Naive thymus-derived CD4-positive, alpha-beta T cell (primary cell): ENCODE measurements at regions of chr3 and their contacts with region 1.

Region 1: GRCh38 chr3:196969660-196970546 is 1.3 kb upstream of the PIGZ start:
- DNase-seq: peak; percentile 43 to 89 (median 66)
- ATAC-seq: peak; percentile 88
- H3K4me3 ChIP-seq: peak overlapping the region; percentile 48
- H3K4me3 Mint-ChIP-seq: peak overlapping the region; percentile 63 to 88 (median 82)
- H3K27ac ChIP-seq: no peak overlapping the region
- H3K27ac Mint-ChIP-seq: peak overlapping the region in 3 of 9 donors; percentile 32 to 53 (median 44)
- H3K4me1 ChIP-seq: no peaks in the 10 kb centered on the region
- H3K4me1 Mint-ChIP-seq: peaks cover 0 to 14% (median 6%) of the 10 kb centered on the region in 7 donors
- H3K27me3 ChIP-seq: no peaks in the 10 kb centered on the region
- H3K27me3 Mint-ChIP-seq: peaks cover 0 to 12% (median 4%) of the 10 kb centered on the region in 5 donors

Region 2: DNA sequence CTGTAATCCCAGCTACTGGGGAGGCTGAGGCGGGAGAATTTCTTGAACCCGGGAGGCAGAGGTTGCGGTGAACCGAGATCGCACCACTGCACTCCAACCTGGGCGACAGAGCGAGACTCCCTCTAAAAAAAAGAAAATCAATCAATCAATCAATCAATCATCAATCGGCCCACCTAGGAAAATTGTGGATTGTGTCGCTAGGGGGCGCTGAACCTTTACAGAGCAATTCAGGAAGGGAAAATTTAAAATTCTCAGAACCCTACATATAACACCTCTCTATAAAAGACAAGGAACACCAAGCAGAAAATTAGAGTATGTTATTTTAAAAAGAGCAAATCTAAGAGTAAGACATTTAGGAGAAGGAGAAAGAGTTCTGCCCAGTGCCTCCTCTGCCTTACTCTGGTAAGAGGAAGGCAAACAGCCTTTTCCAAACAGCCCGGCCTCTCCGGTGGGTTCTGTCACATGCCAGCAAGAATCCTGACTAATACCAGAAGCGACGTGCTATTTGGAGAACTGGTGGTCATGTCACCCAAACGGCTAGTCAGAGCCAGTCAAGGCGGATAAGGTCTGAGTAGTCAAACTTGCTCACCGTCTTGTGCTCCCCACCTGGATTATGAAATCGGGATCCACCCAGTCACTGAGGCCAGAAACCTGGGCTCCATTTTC is 432.5 kb before region 1 on chr3:
- CTCF ChIA-PET with region 1: interaction called, 3 read pairs
- POLR2A ChIA-PET with region 1: no interaction called
- intact Hi-C with region 1: loop called in 1 of 2 experiments (anchors 5 kb)
- DNase-seq: peak; percentile 19 to 60 (median 43)
- ATAC-seq: peak; percentile 46
- H3K4me3 ChIP-seq: no peak overlapping the region
- H3K4me3 Mint-ChIP-seq: no peak overlapping the region
- H3K27ac ChIP-seq: no peak overlapping the region
- H3K27ac Mint-ChIP-seq: no peak overlapping the region
- H3K4me1 ChIP-seq: no peaks in the 10 kb centered on the region
- H3K4me1 Mint-ChIP-seq: peaks cover 0 to 8% (median 0%) of the 10 kb centered on the region in 7 donors
- H3K27me3 ChIP-seq: no peaks in the 10 kb centered on the region
- H3K27me3 Mint-ChIP-seq: peaks cover 0 to 14% (median 0%) of the 10 kb centered on the region in 5 donors

Region 3: GRCh38 chr3:196837819-196838420 is 132.0 kb before region 1 on chr3:
- CTCF ChIA-PET with region 1: interaction called, 16 read pairs
- POLR2A ChIA-PET with region 1: no interaction called
- intact Hi-C with region 1: loop called (anchors 1 kb)
- DNase-seq: peak; percentile 37 to 73 (median 66)
- ATAC-seq: peak; percentile 95
- H3K4me3 ChIP-seq: no peak overlapping the region
- H3K4me3 Mint-ChIP-seq: no peak overlapping the region
- H3K27ac ChIP-seq: no peak overlapping the region
- H3K27ac Mint-ChIP-seq: peak overlapping the region in 2 of 9 donors; percentile 31 to 81
- H3K4me1 ChIP-seq: no peaks in the 10 kb centered on the region
- H3K4me1 Mint-ChIP-seq: peaks cover 0 to 6% (median 0%) of the 10 kb centered on the region in 7 donors
- H3K27me3 ChIP-seq: no peaks in the 10 kb centered on the region
- H3K27me3 Mint-ChIP-seq: no peaks in the 10 kb centered on the region

Region 4: DNA sequence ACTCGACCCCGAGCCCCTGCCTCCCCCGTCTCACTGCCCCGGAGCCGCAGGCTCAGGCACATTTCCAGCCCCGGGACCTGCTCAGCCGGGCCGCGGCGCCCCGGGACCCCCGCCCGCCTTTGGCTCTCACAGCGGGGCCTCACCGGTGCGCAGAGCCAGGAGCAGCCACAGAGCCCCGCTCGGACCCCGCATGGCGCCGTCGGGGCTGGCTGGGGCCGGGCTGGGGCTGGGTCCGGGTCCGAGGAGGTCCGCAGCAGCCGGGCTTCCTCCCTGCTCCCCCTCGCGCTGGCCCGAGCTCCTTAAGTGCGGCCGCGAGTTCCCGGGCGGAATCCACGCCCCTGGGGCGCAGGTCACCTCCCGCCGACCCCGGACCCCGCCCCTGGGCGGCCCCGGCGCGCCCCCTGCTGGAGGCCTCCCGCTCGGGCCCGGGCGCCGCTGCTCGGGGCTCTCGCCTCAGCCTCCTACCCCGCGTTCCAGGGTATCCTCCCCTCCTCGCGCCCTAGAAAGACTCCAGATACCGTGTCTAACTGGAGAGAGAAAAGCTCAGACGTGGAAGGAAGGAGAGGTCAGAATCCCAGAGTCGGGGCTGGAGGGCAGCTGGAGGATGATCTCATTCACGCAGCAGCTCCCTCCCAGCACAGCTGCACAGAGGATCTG is 59.7 kb after region 1 on chr3 and contains the start of gene MELTF:
- CTCF ChIA-PET with region 1: no interaction called
- POLR2A ChIA-PET with region 1: no interaction called
- intact Hi-C with region 1: no loop called
- DNase-seq: peak; percentile 46 to 90 (median 75)
- ATAC-seq: peak; percentile 90
- H3K4me3 ChIP-seq: peak within 1 kb of the TSS; percentile 51
- H3K4me3 Mint-ChIP-seq: peak within 1 kb of the TSS; percentile 64 to 83 (median 78)
- H3K27ac ChIP-seq: peak within 1 kb of the TSS; percentile 24
- H3K27ac Mint-ChIP-seq: peak within 1 kb of the TSS in 3 of 9 donors; percentile 42 to 76 (median 45)
- H3K4me1 ChIP-seq: peaks cover 0 to 4% of the 10 kb centered on the region in 2 donors
- H3K4me1 Mint-ChIP-seq: peaks cover 0 to 19% (median under 1%) of the 10 kb centered on the region in 7 donors
- H3K27me3 ChIP-seq: peaks cover 0 to 3% of the 10 kb centered on the region in 2 donors
- H3K27me3 Mint-ChIP-seq: no peaks in the 10 kb centered on the region
- total RNA-seq, gene MELTF: 0.51 to 7.6 (median 2.7) TPM